Breast epithelium (tissue), 4 donors: ENCODE measurements at regions of chr6 and their contacts with region 1.

Region 1: DNA sequence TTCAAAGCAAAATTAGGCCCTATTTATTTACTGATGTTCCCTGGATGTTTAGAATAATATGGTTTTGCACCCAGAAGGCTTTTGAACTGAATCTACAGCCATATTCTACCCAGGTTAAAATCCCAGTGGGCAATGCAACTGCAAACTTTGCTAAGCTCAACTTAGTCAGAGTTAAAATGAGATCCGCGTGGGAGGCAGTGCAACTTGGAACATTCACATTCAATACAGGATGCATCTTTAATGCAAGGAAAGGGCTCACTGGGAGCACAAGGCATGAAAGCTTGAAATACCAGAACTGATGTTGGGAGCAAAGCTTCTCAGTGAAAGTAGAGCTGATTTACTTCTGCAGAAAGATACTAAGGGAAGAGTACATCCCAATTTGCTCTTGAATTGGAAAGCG is 281.2 kb upstream of the DEFB112 start:
- DNase-seq: no peak
- H3K4me3 ChIP-seq: no peak overlapping the region
- H3K27ac ChIP-seq: no peak overlapping the region
- H3K4me1 ChIP-seq: no peaks in the 10 kb centered on the region
- H3K27me3 ChIP-seq: no peaks in the 10 kb centered on the region
- CTCF ChIP-seq: no peak
- POLR2A ChIP-seq: no peak

Region 2: DNA sequence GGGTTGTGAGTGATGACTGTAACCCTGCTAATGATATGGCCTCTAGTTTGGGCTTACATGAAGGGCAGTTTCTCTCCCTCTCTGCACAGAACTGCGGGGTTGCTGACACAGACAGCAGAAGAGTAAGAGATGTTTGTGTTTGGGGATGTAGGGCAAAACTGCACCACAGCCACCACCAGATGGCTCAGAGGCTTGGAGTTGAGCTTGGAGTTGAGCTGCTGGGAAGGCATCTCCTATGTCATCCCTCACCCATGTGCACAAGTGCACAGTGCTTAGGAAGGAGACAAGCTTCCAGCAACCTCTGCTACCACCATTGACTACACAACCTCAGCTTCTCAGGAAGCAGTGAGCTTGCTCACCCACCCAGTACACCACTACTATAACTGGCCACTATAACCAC is 22.6 kb after region 1 on chr6:
- intact Hi-C with region 1: loop called (anchors 2 kb)
- DNase-seq: no peak
- H3K4me3 ChIP-seq: no peak overlapping the region
- H3K27ac ChIP-seq: no peak overlapping the region
- H3K4me1 ChIP-seq: no peaks in the 10 kb centered on the region
- H3K27me3 ChIP-seq: no peaks in the 10 kb centered on the region
- CTCF ChIP-seq: no peak
- POLR2A ChIP-seq: no peak